Activated CD4-positive, alpha-beta memory T cell treated with anti-CD3 and anti-CD28 coated beads, Interleukin-2, amount 10 ng/mL, durations not matched to agents 7 days and 5 days (primary cell): ENCODE measurements at regions of chr17 and their contacts with region 1.

Region 1: GRCh38 chr17:37759014-37759637 is 14.3 kb upstream of the HNF1B start:
- DNase-seq: no peak
- H3K4me3 Mint-ChIP-seq: no peak overlapping the region
- H3K27ac Mint-ChIP-seq: no peak overlapping the region
- H3K4me1 Mint-ChIP-seq: peaks cover 29% of the 10 kb centered on the region
- H3K27me3 Mint-ChIP-seq: peaks cover 23% of the 10 kb centered on the region

Region 2: DNA sequence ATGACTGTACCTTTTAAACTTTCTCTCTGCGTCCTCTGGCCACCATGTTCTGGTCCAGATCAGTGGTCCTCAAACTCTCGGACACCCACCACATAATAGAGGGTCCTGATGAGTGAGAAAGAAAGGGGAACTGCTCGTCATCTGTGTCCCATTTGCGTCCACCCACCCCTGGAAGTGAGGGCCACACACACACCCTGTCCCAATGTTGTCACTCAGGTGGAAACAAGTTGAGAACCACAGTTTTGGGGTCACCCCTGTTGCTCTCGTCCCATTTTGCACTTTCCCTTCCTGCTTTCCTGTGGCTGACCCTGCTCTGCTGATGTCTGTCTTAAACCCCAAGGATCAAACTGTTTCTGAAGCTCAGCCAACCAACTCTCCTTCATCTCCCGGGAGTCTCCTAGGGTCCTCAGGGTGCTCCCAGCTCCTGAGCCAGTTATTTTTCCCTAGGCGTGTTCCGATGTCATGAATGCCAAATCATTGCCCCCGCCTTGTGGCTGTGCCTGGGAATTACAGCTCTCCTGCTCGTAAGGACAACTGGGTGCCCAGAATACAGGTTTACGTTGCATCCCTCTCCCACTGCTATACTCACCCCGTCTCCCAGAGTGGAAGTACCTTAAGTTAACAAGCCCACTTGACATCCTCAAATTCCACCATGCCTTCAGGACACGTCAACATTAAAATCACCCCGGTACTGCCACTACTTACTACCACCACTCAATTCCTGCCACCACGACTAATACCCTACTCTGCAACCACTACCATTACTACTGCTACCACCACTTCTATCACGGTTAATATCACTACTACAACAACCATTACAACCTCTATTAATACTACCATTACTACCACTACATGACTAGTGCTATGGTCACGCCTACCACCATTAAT is 11.7 kb after region 1 on chr17:
- CTCF ChIA-PET with region 1: interaction called, 12 read pairs
- POLR2A ChIA-PET with region 1: interaction called, 11 read pairs
- DNase-seq: peak; percentile 45
- H3K4me3 Mint-ChIP-seq: no peak overlapping the region
- H3K27ac Mint-ChIP-seq: peak overlapping the region; percentile 6
- H3K4me1 Mint-ChIP-seq: peaks cover 50% of the 10 kb centered on the region
- H3K27me3 Mint-ChIP-seq: peaks cover 16% of the 10 kb centered on the region